ENCODE measurements at regions of chrX and their contacts with region 1.

Region 1: DNA sequence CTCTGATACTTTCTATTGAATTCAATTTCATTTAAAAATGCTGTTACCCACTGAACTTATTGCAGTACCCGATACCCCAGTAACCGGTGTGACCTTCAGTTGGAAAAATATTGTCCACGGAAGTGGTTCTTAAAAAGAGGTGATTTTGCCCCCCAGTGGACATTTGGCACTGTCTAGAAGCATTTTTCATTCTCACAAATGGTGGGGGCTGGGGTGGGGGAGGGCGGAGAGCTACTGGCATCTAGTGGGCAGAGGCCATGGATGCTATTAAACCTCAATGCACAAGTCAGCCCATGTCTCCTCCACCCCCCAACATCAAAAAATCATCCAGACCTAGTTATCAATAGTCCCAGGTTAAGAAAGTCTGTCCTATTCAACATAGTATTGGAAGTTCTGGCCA is 19.6 kb upstream of the CHM start:
- DNase-seq: peak; percentile 26
- H3K4me3 ChIP-seq: no peak overlapping the region
- H3K27ac ChIP-seq: no peak overlapping the region
- H3K4me1 ChIP-seq: no peaks in the 10 kb centered on the region
- H3K27me3 ChIP-seq: peaks cover 9% of the 10 kb centered on the region
- CTCF ChIP-seq: peak; percentile 37

Region 2: DNA sequence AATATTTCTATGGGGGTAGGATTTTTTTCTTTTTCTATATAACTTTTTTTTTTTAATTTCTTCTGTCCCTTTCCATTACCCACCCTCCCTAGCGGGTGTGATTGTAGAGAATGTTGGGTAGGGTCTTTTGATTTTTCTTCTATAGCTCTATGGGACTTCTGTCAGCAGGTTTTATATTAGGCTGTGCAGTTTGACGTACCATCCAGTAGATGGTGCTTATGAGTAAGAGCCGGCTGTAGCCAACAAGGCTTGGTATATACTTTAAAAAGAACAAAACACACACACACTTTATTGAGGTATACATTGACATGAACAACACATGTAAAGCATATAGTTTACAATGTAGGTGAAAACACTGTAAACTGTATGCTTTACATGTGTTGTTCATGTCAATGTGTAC is 439.6 kb before region 1 on chrX:
- CTCF ChIA-PET with region 1: no interaction called
- POLR2A ChIA-PET with region 1: no interaction called
- intact Hi-C with region 1: loop called (anchors 10 kb)
- DNase-seq: peak; percentile 18
- H3K4me3 ChIP-seq: no peak overlapping the region
- H3K27ac ChIP-seq: no peak overlapping the region
- H3K4me1 ChIP-seq: no peaks in the 10 kb centered on the region
- H3K27me3 ChIP-seq: no peaks in the 10 kb centered on the region
- CTCF ChIP-seq: peak; percentile 64

Region 3: DNA sequence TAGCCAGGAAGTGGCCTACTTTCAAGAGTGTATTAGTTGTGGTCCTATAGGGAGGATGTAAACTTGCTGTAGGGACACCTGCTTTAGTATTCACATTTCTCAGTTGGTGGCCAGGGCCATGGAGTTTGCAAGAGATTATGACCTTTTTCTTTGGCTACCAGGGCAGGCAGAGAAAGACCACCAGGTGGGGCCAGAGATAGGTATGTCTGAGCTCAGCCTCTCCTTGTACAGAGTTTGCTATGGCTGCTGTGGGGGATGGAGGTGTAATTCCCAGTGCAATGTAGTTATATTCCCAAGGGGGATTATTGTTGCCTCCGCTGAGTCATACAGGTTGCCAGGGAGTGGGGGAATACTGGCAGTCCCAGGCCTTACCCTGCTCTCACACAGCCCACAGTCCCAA is 54.9 kb after region 1 on chrX:
- CTCF ChIA-PET with region 1: no interaction called
- POLR2A ChIA-PET with region 1: no interaction called
- intact Hi-C with region 1: loop called (anchors 5 kb)
- DNase-seq: no peak
- H3K4me3 ChIP-seq: no peak overlapping the region
- H3K27ac ChIP-seq: no peak overlapping the region
- H3K4me1 ChIP-seq: no peaks in the 10 kb centered on the region
- H3K27me3 ChIP-seq: no peaks in the 10 kb centered on the region
- CTCF ChIP-seq: no peak